BJ (cell line): ENCODE measurements at regions of chr18 and their contacts with region 1.

Region 1: DNA sequence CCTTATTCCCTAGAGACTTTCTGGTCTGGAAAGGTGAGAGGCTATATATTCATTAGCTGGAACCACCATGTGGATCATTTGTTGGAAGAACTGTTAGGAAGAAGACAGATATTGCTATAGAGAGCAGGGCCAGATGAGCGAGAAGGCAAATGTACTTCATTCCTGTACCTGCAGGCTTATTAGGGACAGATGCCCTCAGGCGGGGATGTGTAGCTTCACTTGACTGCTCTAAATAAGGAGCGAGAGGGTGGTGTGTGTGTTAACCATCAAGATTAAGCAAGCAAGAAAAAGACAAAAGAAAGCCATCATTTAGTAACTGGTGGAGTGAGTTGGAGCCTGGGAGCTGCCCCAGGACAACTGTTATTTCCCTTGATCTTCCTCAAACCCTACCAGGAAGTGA is 36.4 kb downstream of the NEDD4L start:
- DNase-seq: no peak
- H3K4me3 ChIP-seq: no peak overlapping the region
- H3K27me3 ChIP-seq: peaks cover 1% of the 10 kb centered on the region; the same call in 1 of the 2 replicates
- CTCF ChIP-seq: no peak

Region 2: DNA sequence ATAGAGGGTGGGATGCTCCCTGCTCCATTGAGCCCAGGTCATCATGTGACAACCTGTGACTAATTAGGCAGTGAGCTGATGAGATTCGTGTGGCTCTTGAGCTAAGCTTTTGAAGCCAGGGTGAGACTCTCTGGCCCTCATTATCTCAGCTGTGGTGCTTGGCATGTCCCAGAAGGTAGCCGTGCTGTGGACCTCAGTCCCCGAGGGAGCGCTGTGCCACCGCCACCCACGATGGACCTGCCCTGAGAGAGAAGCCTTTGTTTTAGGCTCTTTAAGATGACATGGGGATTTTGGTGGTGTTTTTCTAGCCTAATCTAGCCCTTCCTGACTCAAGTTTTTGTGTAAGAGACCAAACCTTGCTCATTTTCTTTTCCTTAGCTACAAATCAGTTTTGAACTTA is 29.9 kb after region 1 on chr18:
- CTCF ChIA-PET with region 1: no interaction called
- POLR2A ChIA-PET with region 1: interaction called, 11 read pairs
- DNase-seq: no peak
- H3K4me3 ChIP-seq: no peak overlapping the region
- H3K27me3 ChIP-seq: no peaks in the 10 kb centered on the region; the same call in 1 of the 2 replicates
- CTCF ChIP-seq: no peak

Region 3: GRCh38 chr18:58202406-58202730 is 121.9 kb after region 1 on chr18:
- CTCF ChIA-PET with region 1: no interaction called
- POLR2A ChIA-PET with region 1: no interaction called
- DNase-seq: no peak
- H3K4me3 ChIP-seq: no peak overlapping the region
- H3K27me3 ChIP-seq: no peaks in the 10 kb centered on the region
- CTCF ChIP-seq: no peak

Region 4: GRCh38 chr18:58394602-58395425 is 314.4 kb after region 1 on chr18:
- CTCF ChIA-PET with region 1: no interaction called
- POLR2A ChIA-PET with region 1: no interaction called
- DNase-seq: no peak
- H3K4me3 ChIP-seq: no peak overlapping the region
- H3K27me3 ChIP-seq: no peaks in the 10 kb centered on the region
- CTCF ChIP-seq: no peak